BJ (cell line): ENCODE measurements at regions of chr4 and their contacts with region 1.

Region 1: GRCh38 chr4:1167247-1167949 is 5.0 kb downstream of the SPON2 start:
- DNase-seq: no peak
- H3K4me3 ChIP-seq: peak overlapping the region; percentile 43
- H3K27me3 ChIP-seq: peaks cover 3% of the 10 kb centered on the region; the same call in 1 of the 2 replicates
- CTCF ChIP-seq: peak; percentile 94

Region 2: GRCh38 chr4:663438-664428 is 503.7 kb before region 1 on chr4:
- CTCF ChIA-PET with region 1: no interaction called
- POLR2A ChIA-PET with region 1: no interaction called
- DNase-seq: no peak
- H3K4me3 ChIP-seq: peak overlapping the region; percentile 23
- H3K27me3 ChIP-seq: no peaks in the 10 kb centered on the region
- CTCF ChIP-seq: no peak

Region 3: DNA sequence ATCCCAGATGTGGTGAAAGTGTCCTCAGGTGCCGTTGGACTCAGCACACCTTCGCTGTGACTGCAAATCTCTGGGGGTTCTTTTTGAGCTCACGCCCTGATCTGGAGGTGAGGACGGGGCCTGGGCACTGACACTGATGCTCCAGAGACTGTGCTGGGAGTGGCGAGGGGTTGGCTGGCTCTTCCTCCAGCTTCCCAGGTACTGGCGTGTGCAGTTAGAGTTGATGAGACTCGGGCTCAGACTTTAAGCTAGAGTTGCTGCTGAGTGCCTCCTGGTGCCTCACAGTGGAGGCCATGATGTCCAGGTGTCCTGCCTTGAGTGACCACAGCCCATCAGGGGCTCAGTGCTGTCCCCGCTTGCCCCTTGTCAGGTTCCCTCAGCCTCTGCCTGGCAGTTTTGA is 11.3 kb before region 1 on chr4:
- CTCF ChIA-PET with region 1: interaction called, 16 read pairs
- POLR2A ChIA-PET with region 1: no interaction called
- DNase-seq: no peak
- H3K4me3 ChIP-seq: no peak overlapping the region
- H3K27me3 ChIP-seq: peaks cover 4% of the 10 kb centered on the region
- CTCF ChIP-seq: no peak

Region 4: DNA sequence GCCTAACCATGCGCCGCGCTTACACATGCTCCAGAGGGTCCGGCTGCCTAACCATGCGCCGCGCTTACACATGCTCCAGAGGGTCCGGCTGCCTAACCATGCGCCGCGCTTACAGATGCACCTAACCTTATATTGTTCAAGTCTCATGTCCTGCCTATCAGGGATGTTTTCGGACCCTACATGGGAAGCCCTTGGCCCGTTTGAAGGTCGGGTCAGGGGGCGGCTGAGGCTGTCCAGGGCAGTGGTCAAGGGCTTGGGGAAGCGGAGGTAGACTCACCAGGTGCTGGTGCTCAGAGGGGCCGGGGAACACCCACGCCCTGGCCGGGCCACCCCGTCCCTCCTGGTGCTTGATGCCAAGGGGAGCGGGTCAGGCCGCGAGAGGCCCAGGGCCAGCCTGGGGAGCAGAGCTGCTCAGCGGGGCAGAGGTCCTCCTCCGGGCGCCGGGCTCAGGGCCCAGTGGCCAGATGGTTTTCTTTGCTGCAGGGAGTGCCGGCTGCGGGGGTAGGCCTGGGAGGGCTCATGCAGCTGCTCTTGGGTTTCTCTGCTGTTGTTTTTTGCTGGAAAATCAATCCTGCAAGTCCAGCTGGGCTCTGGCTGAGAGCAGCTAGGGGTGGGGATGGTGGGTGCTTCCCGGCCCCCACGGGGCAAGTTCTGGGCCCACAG is 40.3 kb after region 1 on chr4:
- CTCF ChIA-PET with region 1: interaction called, 31 read pairs
- POLR2A ChIA-PET with region 1: no interaction called
- DNase-seq: peak; percentile 31
- H3K4me3 ChIP-seq: no peak overlapping the region
- H3K27me3 ChIP-seq: no peaks in the 10 kb centered on the region
- CTCF ChIP-seq: no peak

Region 5: GRCh38 chr4:1233641-1234308 is 66.4 kb after region 1 on chr4:
- CTCF ChIA-PET with region 1: interaction called, 26 read pairs
- POLR2A ChIA-PET with region 1: no interaction called
- DNase-seq: no peak
- H3K4me3 ChIP-seq: no peak overlapping the region
- H3K27me3 ChIP-seq: no peaks in the 10 kb centered on the region
- CTCF ChIP-seq: peak; percentile 70